PC-9 (cell line): ENCODE measurements at regions of chr3 and their contacts with region 1.

Region 1: GRCh38 chr3:184636741-184637316 is 75.0 kb downstream of the MAGEF1 start:
- DNase-seq: peak; percentile 83 to 87
- H3K4me3 ChIP-seq: no peak overlapping the region
- H3K27ac ChIP-seq: no peak overlapping the region
- H3K4me1 ChIP-seq: peaks cover 61% of the 10 kb centered on the region
- H3K27me3 ChIP-seq: no peaks in the 10 kb centered on the region
- CTCF ChIP-seq: no peak

Region 2: DNA sequence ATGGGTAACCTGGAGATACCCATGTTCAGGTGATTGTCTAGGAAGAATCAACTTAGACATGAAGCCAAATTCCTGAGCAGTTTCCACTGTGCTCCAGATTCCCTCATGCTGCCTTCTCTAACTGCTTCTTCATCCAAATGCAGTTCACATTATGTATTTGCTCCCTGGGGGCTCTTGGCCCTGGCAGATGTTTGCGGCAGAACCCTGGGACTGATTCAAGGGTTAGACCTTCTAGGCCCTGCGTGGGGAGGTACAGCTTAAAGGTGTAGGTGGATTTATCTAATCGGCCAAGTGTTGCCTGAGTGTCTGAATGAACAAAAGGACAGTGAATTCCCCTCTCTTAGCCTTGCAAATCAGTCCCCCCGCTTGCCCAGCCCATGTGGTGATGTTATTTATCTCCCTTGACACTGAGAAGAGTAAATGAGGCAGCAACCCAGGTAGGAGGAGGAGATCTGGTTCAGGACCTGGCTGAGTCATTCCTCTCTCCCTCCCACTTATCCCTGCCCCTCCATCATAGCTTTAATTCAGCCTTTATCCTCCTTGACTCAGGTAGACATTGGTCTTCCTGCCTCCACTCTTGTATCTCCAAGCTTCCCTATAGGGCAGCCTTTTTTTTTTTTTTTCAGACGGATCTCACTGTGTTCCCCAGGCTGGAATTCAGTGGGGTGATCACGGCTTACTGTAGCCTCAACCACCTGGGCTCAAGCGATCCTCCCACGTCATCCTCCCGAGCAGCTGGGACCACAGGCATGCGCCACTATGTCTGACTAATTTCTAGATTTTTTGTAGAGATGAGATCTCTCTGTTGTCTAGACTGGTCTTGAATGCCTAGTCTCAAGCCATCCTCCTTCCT is 20.2 kb after region 1 on chr3:
- CTCF ChIA-PET with region 1: interaction called, 12 read pairs
- POLR2A ChIA-PET with region 1: no interaction called
- intact Hi-C with region 1: loop called (anchors 1 kb)
- DNase-seq: peak in 1 of 2 experiments; percentile 78
- H3K4me3 ChIP-seq: no peak overlapping the region
- H3K27ac ChIP-seq: no peak overlapping the region
- H3K4me1 ChIP-seq: peaks cover 38% of the 10 kb centered on the region
- H3K27me3 ChIP-seq: no peaks in the 10 kb centered on the region
- CTCF ChIP-seq: no peak

Region 3: DNA sequence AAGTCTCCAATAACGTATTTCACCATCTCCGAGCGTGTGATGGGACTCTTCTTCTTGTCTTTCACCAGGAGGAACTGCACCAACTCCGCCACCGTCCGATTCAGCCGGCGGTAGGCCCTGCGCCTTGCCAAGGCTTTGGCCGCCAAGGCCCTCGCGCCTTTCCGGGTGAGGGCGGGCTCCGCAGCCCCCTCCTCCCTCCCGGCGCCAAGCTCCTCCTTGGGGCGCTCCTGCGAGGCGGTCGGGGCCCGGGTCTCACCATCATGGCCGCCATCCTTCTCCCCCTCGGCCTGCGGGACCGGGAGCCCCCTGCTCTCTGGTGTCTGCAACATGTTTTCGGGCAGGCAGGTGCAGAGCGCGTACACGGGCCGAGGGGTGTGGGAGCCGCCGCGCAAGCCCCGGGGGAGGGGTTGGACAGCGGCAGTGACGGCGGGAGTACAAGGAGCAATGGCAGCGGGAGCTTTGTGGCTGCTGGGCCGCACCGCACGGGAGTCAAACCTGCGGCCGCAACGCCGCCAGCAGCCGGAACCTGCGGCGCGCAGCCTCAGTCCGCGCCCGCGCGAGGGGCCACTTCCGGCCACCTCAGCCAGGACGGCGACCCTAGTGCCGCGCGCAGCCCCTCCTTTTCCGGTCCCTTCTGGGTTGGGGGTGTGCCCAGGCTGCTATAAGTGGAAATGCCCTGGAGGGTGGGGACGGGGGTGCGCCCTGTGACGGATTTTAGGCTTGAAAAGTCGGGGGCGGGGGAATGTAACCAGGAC is 74.8 kb after region 1 on chr3 and contains the start of gene MAGEF1:
- CTCF ChIA-PET with region 1: no interaction called
- POLR2A ChIA-PET with region 1: no interaction called
- intact Hi-C with region 1: loop called (anchors 1 kb)
- DNase-seq: peak; percentile 81 to 96
- H3K4me3 ChIP-seq: peak within 1 kb of the TSS; percentile 91
- H3K27ac ChIP-seq: peak within 1 kb of the TSS; percentile 79
- H3K4me1 ChIP-seq: peaks cover 21% of the 10 kb centered on the region
- H3K27me3 ChIP-seq: no peaks in the 10 kb centered on the region
- CTCF ChIP-seq: no peak
- total RNA-seq, gene MAGEF1: 97.2 and 106 TPM in 2 replicates

Region 4: DNA sequence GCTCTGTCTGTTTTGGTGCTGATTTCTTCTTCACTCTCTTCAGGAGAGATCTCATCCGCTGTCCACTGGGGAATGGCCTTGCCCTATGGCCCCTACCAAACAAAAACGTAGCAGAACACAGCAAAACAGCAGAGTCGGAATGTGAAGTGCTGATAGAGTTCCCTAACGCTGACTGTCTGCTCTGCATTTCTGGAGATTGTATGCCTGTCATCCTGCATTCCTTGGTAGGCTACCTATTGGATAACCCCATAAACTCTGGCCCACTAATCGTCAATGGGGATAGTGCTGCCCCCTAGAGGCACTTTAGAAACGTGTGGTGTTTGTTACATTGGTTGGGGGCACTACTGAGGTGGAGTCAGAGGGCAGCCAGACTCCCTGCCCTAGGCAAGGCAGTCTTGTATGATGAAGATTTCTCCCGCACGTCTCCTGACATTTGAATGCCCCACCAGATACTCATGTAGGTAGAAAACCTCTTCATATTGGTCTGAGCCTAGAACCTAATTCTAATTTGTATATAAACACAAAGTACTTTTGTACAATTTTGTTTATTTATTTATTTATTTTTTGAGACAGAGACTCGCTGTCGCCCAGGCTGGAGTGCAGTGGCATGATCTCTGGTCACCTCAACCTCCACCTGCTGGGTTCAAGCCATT is 90.7 kb after region 1 on chr3:
- CTCF ChIA-PET with region 1: no interaction called
- POLR2A ChIA-PET with region 1: no interaction called
- intact Hi-C with region 1: loop called (anchors 5 kb)
- DNase-seq: peak; percentile 76 to 82
- H3K4me3 ChIP-seq: no peak overlapping the region
- H3K27ac ChIP-seq: no peak overlapping the region
- H3K4me1 ChIP-seq: peaks cover 10% of the 10 kb centered on the region
- H3K27me3 ChIP-seq: no peaks in the 10 kb centered on the region
- CTCF ChIP-seq: peak; percentile 91